Activated CD8-positive, alpha-beta T cell treated with anti-CD3 and anti-CD28 coated beads for 36 hours (primary cell): ENCODE measurements at regions of chr1 and their contacts with region 1.

Region 1: GRCh38 chr1:63327417-63328139 is 5.2 kb downstream of the FOXD3 start:
- DNase-seq: peak; percentile 71
- ATAC-seq: peak; percentile 72
- H3K4me3 Mint-ChIP-seq: no peak overlapping the region
- H3K27ac Mint-ChIP-seq: no peak overlapping the region
- H3K4me1 Mint-ChIP-seq: peaks cover 21% of the 10 kb centered on the region
- H3K27me3 Mint-ChIP-seq: peaks cover 62% of the 10 kb centered on the region
- CTCF ChIP-seq: peak; percentile 74

Region 2: DNA sequence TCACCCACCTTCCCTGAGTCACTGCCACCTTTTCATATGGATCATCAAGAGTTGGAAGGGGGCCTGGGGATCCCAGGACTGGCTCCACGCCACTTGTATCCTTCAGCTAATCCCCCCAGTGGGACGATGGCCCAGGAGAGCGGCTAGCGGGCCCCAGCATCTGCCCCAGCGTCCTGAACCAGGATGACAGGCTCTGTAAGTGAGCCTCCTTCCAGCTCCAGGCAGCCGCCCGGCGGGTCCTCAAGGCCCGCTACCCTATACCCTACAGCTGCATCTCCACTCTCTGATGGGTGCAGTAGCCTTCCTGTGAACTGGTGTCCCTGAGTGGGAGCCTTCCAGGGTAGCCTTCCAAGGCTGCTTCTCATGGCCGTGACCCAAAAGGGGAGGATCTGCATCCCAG is 360.5 kb before region 1 on chr1:
- CTCF ChIA-PET with region 1: no interaction called
- POLR2A ChIA-PET with region 1: no interaction called
- intact Hi-C with region 1: no loop called
- DNase-seq: no peak
- ATAC-seq: no peak
- H3K4me3 Mint-ChIP-seq: no peak overlapping the region
- H3K27ac Mint-ChIP-seq: no peak overlapping the region
- H3K4me1 Mint-ChIP-seq: no peaks in the 10 kb centered on the region
- H3K27me3 Mint-ChIP-seq: peaks cover 12% of the 10 kb centered on the region
- CTCF ChIP-seq: no peak

Region 3: DNA sequence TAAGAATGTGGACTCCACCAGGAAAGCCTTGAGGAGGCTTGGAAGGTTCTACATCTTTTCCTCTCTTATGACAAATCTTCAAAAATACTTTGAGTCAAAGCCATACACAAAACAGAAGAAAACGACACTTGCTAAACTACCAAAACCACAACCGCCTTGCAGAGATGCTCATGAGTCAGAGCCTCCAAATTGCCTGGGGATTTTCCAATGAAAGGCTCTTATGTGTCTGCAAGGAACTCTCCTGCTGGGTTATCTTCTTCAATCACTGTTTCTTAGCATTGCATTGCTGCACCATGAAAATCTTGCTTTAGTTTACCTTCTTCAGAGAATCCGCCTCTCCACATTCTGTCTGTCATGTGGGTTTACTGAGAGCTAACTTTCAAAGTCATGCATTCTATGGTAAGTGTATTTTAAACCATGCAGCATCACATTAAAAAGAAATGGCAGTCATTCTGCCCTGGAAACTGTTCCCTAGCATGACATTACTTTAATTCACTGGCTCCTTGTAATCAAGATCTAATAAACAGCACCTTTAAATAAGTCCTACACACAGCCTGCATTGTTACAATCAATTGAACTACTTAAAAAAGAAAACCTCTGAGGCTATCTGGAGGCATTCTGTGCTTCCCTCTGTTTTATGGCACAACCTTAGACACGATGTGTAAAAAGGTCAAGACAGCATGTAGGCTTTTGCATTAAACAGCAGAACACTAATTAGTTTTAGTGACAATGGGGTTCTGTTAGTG is 215.2 kb before region 1 on chr1:
- CTCF ChIA-PET with region 1: no interaction called
- POLR2A ChIA-PET with region 1: no interaction called
- intact Hi-C with region 1: no loop called
- DNase-seq: peak; percentile 7
- ATAC-seq: no peak
- H3K4me3 Mint-ChIP-seq: no peak overlapping the region
- H3K27ac Mint-ChIP-seq: no peak overlapping the region
- H3K4me1 Mint-ChIP-seq: no peaks in the 10 kb centered on the region
- H3K27me3 Mint-ChIP-seq: peaks cover 14% of the 10 kb centered on the region
- CTCF ChIP-seq: no peak

Region 4: DNA sequence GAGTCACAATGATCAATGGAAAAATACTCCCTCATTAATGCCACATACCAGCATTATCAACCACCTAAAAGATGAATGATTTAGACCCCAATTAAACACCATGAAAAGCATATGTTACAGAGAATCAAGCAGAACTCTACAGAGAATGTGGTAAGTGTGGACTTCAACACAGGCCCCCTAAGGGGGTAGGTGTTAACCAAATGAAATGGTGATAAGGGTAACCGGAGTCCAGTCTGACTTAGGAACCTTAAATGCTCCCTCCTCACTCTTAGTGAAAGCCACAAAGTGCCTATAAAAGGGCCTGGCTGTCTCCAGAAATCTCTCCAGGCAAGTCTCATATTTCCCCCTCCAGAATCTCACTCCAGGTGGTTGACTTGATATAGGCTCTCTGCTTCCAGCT is 154.4 kb before region 1 on chr1:
- CTCF ChIA-PET with region 1: no interaction called
- POLR2A ChIA-PET with region 1: no interaction called
- intact Hi-C with region 1: no loop called
- DNase-seq: no peak
- ATAC-seq: no peak
- H3K4me3 Mint-ChIP-seq: no peak overlapping the region
- H3K27ac Mint-ChIP-seq: no peak overlapping the region
- H3K4me1 Mint-ChIP-seq: no peaks in the 10 kb centered on the region
- H3K27me3 Mint-ChIP-seq: peaks cover 16% of the 10 kb centered on the region
- CTCF ChIP-seq: no peak

Region 5: DNA sequence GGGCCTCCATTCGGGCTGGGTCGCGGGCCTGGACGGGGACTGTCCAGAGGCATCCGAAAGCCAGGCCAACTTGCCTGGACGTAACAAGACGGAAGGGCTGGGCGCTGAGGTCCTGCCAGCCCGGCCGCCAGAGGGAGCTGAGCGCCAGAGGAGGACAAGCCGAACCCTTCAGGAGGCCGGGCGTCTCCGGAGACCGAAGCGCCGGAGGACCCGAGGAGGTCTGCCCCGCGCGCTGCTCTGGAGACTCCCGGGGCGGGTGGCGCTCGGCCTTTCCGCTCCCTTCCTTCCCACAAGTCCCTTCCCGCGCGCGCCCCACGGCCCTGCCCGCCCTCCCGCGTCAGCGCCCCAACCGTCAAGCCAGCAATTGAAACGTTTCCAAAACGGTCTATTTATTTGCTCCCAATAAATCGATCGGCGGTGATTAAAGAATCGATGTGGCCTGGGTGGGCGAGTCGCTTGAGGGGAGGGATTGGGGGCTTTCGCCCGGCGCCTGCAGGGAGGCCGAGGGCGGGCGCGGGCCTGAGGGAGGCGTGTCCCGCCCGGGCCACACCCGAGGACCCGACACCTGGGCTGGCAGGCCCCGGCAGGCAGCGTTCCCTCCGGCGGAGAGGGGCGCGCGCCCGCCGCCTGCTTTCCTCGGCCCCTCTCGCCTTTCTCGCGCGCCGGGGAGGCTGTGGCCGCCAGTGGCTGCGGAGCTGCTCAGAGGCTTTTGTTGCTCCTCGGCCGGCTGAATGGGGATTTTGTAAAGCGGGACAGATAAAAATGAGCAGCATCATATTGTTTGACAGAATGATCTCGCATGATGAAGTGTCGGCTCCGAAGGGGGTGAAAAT is 10.4 kb before region 1 on chr1:
- CTCF ChIA-PET with region 1: interaction called, 39 read pairs
- POLR2A ChIA-PET with region 1: interaction called, 5 read pairs
- intact Hi-C with region 1: no loop called
- DNase-seq: peak; percentile 76
- ATAC-seq: peak; percentile 86
- H3K4me3 Mint-ChIP-seq: peak overlapping the region; percentile 60
- H3K27ac Mint-ChIP-seq: no peak overlapping the region
- H3K4me1 Mint-ChIP-seq: peaks cover 30% of the 10 kb centered on the region
- H3K27me3 Mint-ChIP-seq: peaks cover 68% of the 10 kb centered on the region
- CTCF ChIP-seq: peak; percentile 50

Region 6: GRCh38 chr1:63411066-63411465 is 83.5 kb after region 1 on chr1:
- CTCF ChIA-PET with region 1: no interaction called
- POLR2A ChIA-PET with region 1: no interaction called
- intact Hi-C with region 1: no loop called
- DNase-seq: no peak
- ATAC-seq: no peak
- H3K4me3 Mint-ChIP-seq: no peak overlapping the region
- H3K27ac Mint-ChIP-seq: no peak overlapping the region
- H3K4me1 Mint-ChIP-seq: no peaks in the 10 kb centered on the region
- H3K27me3 Mint-ChIP-seq: no peaks in the 10 kb centered on the region
- CTCF ChIP-seq: no peak

Region 7: DNA sequence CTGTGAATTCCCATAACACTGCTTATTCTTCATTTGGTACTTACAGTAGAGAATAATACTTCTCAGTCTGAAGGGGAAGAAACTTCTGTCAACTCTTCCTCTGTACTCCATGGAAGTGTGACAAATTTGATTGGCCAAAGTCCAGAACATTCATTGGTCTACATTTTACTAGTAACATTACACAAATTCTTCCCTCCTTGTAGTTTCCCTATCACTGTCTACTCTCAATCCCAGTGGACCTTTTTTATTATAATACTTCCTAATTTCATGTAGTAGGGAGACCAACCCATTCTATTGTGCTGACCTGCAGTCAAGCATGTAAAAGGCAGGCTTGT is 114.5 kb after region 1 on chr1:
- CTCF ChIA-PET with region 1: interaction called, 4 read pairs
- POLR2A ChIA-PET with region 1: no interaction called
- intact Hi-C with region 1: loop called (anchors 5 kb)
- DNase-seq: no peak
- ATAC-seq: no peak
- H3K4me3 Mint-ChIP-seq: no peak overlapping the region
- H3K27ac Mint-ChIP-seq: no peak overlapping the region
- H3K4me1 Mint-ChIP-seq: no peaks in the 10 kb centered on the region
- H3K27me3 Mint-ChIP-seq: no peaks in the 10 kb centered on the region
- CTCF ChIP-seq: no peak

Region 8: DNA sequence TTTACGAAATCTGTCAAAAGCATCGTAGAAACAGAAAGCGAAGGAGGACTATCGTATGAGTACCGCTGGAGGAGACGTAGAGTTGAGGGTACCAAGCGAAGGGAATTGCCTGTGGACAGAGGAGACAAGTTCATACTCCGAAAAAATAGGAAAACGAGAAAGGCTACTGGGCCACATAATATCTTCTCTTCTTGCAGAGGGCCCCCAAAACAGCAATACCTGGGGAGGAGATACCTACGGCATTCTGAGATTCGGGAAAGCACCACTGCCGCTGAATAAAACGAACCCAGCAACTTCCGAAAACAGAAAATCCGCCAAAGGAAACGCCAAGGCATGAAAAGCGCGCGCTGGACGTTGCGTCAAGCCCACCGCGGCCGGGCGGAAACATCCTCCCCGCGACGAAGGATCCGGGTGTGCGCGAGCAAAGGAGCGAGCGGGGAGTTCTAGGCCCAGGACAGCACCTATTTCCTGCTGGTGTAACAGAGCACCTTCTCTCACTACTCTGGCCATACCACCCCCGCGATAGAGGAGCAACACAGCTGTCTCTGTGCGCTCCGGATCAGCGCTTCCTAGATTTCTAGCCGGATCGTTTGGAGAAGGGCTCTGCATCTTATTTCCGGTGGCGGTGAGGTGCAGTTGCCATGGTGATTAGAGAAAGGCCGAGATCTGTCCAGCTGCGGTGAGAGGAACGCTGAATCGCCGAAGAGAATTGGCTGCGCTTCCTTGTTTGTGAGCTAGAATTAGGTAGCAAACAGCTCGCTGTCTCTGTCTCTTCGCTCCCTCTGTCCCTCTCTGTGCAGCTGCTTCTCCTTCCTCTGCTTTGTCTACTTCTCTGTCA is 195.5 kb after region 1 on chr1 and contains the starts of genes EFCAB7 and ITGB3BP:
- CTCF ChIA-PET with region 1: no interaction called
- POLR2A ChIA-PET with region 1: interaction called, 3 read pairs
- intact Hi-C with region 1: loop called (anchors 10 kb)
- DNase-seq: peak; percentile 85
- ATAC-seq: peak; percentile 92
- H3K4me3 Mint-ChIP-seq: peak within 1 kb of the TSS; percentile 84
- H3K27ac Mint-ChIP-seq: peak within 1 kb of the TSS; percentile 98
- H3K4me1 Mint-ChIP-seq: peaks cover 23% of the 10 kb centered on the region
- H3K27me3 Mint-ChIP-seq: no peaks in the 10 kb centered on the region
- CTCF ChIP-seq: no peak
- total RNA-seq, gene EFCAB7: 6.1 to 6.8 TPM
- total RNA-seq, gene ITGB3BP: 76.6 to 86.6 TPM